ENCODE measurements at regions of chr6 and their contacts with region 1.

Region 1: GRCh38 chr6:136643850-136644596 is 93.8 kb upstream of the MAP7 start:
- DNase-seq: peak; percentile 73
- H3K4me3 ChIP-seq: no peak overlapping the region; a peak in 1 of 4 replicates
- H3K27ac ChIP-seq: peak overlapping the region; percentile 19 to 53; a peak in 2 of 4 replicates
- H3K4me1 ChIP-seq: peaks cover 4 to 9% of the 10 kb centered on the region in 2 experiments; a peak in 2 of 4 replicates
- H3K27me3 ChIP-seq: no peaks in the 10 kb centered on the region
- CTCF ChIP-seq: peak; percentile 83
- EP300 ChIP-seq: no peak
- RAD21 ChIP-seq: peak; percentile 92

Region 2: GRCh38 chr6:136127873-136128272 is 516.1 kb before region 1 on chr6:
- CTCF ChIA-PET with region 1: no interaction called
- POLR2A ChIA-PET with region 1: no interaction called
- DNase-seq: no peak
- H3K4me3 ChIP-seq: no peak overlapping the region
- H3K27ac ChIP-seq: peak overlapping the region in 1 of 2 experiments; percentile 50; a peak in 2 of 4 replicates
- H3K4me1 ChIP-seq: peaks cover 5 to 13% of the 10 kb centered on the region in 2 experiments; a peak in 2 of 4 replicates
- H3K27me3 ChIP-seq: no peaks in the 10 kb centered on the region
- CTCF ChIP-seq: no peak
- EP300 ChIP-seq: no peak
- RAD21 ChIP-seq: no peak

Region 3: GRCh38 chr6:136600818-136601217 is 43.2 kb before region 1 on chr6:
- CTCF ChIA-PET with region 1: interaction called, 12 read pairs
- POLR2A ChIA-PET with region 1: no interaction called
- DNase-seq: no peak
- H3K4me3 ChIP-seq: no peak overlapping the region
- H3K27ac ChIP-seq: no peak overlapping the region
- H3K4me1 ChIP-seq: peaks cover 0 to 6% of the 10 kb centered on the region in 2 experiments; a peak in 1 of 4 replicates
- H3K27me3 ChIP-seq: no peaks in the 10 kb centered on the region
- CTCF ChIP-seq: no peak
- EP300 ChIP-seq: no peak
- RAD21 ChIP-seq: no peak

Region 4: DNA sequence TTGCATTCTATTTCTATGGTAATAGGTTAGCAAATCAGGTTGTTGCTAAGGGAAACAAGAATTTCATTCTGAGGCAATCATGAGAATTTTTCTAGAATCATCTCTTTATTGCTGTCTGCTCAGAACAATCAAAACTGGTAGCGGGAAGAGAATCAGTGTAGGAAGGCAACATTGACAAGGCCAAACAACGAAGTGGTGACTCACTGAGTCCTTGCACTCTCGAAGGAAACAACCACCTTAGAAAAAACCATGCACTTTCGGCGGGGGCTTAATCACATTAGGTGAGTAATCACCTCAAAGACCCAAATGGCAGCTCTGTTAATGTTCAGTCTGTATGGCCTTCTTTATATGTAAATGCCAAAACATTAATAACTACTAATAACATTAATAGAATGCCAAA is 15.0 kb before region 1 on chr6:
- CTCF ChIA-PET with region 1: interaction called, 25 read pairs
- POLR2A ChIA-PET with region 1: interaction called, 3 read pairs
- DNase-seq: no peak
- H3K4me3 ChIP-seq: no peak overlapping the region
- H3K27ac ChIP-seq: peak overlapping the region in 1 of 2 experiments; percentile 47; a peak in 1 of 4 replicates
- H3K4me1 ChIP-seq: no peaks in the 10 kb centered on the region; a peak in 1 of 4 replicates
- H3K27me3 ChIP-seq: no peaks in the 10 kb centered on the region
- CTCF ChIP-seq: no peak
- EP300 ChIP-seq: no peak
- RAD21 ChIP-seq: no peak

Region 5: DNA sequence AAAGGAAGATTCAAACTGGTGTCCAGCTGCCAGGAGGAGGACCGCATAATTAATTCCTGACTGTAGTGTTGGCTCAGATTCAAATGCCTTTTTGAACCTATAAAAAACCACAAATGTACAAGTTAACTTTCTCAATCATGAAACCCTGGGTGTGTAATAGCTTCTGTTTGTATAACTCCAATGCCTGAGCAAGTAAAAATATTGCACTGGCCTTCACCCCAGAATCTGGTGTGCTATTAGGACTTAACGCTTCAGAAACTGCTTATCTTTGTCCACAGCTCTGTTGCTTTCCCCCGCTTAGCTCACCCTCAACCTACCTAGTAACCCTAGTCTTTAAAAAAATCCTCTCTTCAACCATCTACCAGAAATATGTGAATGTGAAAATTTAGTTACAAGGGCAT is 25.3 kb after region 1 on chr6:
- CTCF ChIA-PET with region 1: interaction called, 27 read pairs
- POLR2A ChIA-PET with region 1: no interaction called
- DNase-seq: no peak
- H3K4me3 ChIP-seq: no peak overlapping the region
- H3K27ac ChIP-seq: no peak overlapping the region
- H3K4me1 ChIP-seq: peaks cover 0 to 3% of the 10 kb centered on the region in 2 experiments; a peak in 2 of 4 replicates
- H3K27me3 ChIP-seq: no peaks in the 10 kb centered on the region
- CTCF ChIP-seq: no peak
- EP300 ChIP-seq: no peak
- RAD21 ChIP-seq: no peak

Region 6: GRCh38 chr6:136889271-136890191 is 245.5 kb after region 1 on chr6:
- CTCF ChIA-PET with region 1: interaction called, 11 read pairs
- POLR2A ChIA-PET with region 1: no interaction called
- DNase-seq: no peak
- H3K4me3 ChIP-seq: no peak overlapping the region
- H3K27ac ChIP-seq: peak overlapping the region in 1 of 2 experiments; percentile 69; a peak in 2 of 4 replicates
- H3K4me1 ChIP-seq: peaks cover 6 to 14% of the 10 kb centered on the region in 2 experiments; a peak in 3 of 4 replicates
- H3K27me3 ChIP-seq: no peaks in the 10 kb centered on the region
- CTCF ChIP-seq: no peak
- EP300 ChIP-seq: no peak
- RAD21 ChIP-seq: no peak